ENCODE measurements at regions of chr2 and their contacts with region 1.

Region 1: DNA sequence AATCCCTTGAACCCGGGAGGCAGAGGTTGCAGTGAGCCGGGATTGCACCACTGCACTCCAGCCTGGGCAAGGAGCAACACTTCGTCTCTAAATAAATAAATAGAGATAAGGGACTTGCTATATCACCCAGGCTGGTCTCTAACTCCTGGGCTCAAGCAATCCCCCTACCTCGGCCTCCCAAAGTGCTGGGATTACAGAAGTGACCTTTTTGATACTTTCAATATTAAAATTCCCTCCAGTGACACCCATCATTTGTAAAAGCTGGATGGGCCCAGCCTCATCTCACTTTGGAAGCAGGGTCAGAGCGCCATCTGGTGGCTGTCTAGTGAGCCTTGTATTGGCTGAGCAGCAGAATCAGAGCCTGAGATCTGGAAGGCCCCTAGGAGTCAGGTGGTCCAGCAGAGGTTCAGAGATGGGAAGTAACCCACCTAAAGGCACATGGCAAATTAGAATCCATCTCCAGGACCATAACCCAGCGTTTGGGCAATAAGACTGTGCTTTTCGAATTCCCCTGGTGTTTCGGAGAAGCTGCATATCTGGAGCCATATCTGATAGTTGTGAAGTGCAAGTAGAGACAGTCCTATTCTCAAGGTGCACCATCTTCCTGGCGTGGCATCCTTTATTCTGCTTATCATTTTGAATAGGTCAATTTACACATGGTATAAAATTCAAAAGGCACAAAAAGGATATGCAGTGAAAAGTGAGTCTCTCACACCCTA is 18.3 kb upstream of the SLC35F6 start:
- DNase-seq: peak; percentile 66
- H3K27ac ChIP-seq: no peak overlapping the region
- CTCF ChIP-seq: peak; percentile 92

Region 2: DNA sequence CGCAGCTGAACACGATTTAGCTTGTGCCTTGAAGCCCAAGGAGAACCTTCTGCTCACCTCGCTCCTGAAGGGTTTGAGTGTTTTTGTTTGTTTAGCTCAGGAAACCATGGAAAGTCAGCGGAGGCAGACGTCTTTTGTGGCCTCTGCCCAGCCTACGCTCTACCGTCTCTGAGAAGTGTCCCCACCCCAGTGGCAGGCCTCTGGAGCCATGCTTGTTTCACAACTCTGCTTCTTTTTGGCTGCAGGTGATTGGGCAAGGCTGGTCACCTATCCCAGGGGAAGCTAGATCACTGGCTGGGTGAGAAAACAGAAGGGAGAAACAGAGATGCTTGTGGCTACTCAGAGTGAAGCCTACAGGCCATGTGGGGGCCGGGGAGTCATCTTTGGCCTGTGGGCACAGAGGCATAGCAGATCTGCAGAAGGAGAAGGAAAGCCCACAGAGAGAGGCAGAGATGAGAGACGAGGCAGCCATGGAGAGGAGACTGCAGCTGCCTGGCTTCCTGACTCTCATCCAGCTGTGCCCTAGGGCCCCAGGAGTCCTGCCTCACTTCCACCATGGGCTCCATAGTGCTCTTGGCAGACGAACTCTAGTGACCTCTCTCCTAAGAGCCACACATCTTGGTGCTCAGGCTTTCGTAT is 154.7 kb before region 1 on chr2:
- CTCF ChIA-PET with region 1: interaction called, 10 read pairs
- POLR2A ChIA-PET with region 1: no interaction called
- DNase-seq: no peak
- H3K27ac ChIP-seq: no peak overlapping the region
- CTCF ChIP-seq: no peak

Region 3: GRCh38 chr2:26605195-26605998 is 140.4 kb before region 1 on chr2:
- CTCF ChIA-PET with region 1: interaction called, 64 read pairs
- POLR2A ChIA-PET with region 1: no interaction called
- DNase-seq: peak; percentile 62
- H3K27ac ChIP-seq: no peak overlapping the region
- CTCF ChIP-seq: peak; percentile 76

Region 4: DNA sequence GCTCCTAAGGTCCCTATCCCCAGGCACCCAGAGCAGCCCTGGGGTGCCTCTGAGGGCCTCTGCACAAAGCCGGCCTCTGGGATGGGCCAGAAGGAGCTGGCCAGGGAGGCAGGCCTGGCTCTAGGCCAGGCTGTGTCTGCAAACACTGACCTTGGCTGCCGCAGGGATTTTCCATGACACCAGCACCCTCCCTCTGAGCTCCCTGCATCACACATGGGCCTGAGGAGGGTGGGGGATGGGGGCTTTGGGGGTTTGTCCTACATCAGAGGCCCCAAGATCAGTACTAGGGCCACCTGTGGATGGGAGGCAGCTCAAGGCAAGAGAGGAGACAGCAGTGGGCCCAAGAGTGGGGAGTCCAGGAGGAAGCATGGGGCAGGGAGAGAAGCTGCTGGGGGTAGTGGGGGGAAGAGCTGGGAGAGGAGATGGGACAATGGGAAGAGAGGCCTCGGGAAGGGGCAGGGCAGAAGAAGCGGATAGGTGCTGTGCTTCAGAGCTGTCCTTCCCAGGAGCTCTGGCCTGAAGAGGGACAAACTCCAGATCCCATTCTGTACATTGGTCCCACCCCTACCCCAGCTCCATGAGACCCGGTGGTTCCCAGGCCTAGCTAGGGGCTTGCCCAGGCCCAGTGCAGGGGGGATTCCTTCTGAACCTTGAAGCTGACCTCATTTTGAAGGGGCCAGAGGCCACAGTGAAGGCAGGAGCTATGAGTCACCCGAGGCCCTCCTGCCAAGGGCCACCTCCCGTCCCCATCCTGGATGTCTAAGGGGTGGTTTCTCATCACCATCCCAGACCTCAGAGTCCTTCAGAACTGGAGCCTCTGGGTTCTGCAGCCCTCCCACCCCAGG is 25.2 kb before region 1 on chr2:
- CTCF ChIA-PET with region 1: no interaction called
- POLR2A ChIA-PET with region 1: no interaction called
- DNase-seq: no peak
- H3K27ac ChIP-seq: no peak overlapping the region
- CTCF ChIP-seq: no peak

Measured in RWPE1 (cell line).